H1 (cell line): ENCODE measurements at regions of chr14 and their contacts with region 1.

Region 1: GRCh38 chr14:23068476-23069412 is 11.4 kb upstream of the CDH24 start:
- DNase-seq: peak; percentile 84 to 85
- H3K4me3 ChIP-seq: peak overlapping the region in 1 of 4 experiments; percentile 18; a peak in 1 of 8 replicates
- H3K27ac ChIP-seq: no peak overlapping the region
- H3K4me1 ChIP-seq: peaks cover 5 to 27% (median 15%) of the 10 kb centered on the region in 4 experiments; a peak in 6 of 7 replicates
- H3K27me3 ChIP-seq: no peaks in the 10 kb centered on the region
- CTCF ChIP-seq: peak; percentile 82 to 99 (median 99)
- EP300 ChIP-seq: no peak
- POLR2A ChIP-seq: no peak
- RAD21 ChIP-seq: peak; percentile 59 to 71

Region 2: DNA sequence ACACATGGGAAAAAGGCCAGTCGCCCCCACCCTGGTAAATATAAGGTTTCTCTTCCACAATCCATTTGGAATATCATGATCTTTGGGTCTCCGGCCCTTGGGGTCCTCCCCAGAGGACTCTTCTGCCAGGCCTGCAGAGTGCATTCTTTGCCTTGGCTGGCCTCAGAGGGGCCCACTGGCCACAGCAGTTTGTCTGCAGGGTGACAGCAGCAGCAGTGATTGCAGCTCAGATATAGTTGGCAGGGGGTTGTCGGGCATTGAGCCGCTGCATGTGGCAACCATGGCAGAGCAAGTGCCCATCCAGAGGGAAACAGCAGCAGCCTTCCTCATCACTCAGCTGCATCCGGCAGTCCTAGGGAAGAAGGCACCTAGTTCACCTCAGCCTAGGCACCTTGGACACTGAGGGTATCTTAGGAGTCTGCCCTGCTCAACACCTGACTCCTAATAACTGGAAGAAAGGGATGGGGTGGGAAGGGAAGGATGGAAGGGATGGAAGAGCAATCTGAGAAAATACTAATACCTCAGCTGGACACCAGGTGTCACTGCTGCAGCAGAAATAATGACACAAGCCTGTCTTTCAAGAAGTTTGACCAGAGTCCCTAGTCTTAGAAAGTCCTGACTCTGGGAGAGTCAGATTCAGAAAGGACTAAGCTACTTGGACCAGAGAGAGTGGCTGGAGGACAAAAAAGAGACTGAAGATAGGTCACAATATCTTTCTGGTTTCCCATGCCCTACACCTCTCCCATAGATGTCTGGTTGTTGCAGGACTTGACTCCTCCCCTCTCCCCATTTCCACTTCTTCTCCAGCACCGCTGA is 95.3 kb before region 1 on chr14:
- CTCF ChIA-PET with region 1: interaction called, 9 read pairs
- POLR2A ChIA-PET with region 1: interaction called, 11 read pairs
- DNase-seq: peak in 1 of 2 experiments; percentile 66
- H3K4me3 ChIP-seq: no peak overlapping the region
- H3K27ac ChIP-seq: no peak overlapping the region
- H3K4me1 ChIP-seq: peaks cover 13 to 20% (median 18%) of the 10 kb centered on the region in 4 experiments
- H3K27me3 ChIP-seq: no peaks in the 10 kb centered on the region
- CTCF ChIP-seq: peak in 2 of 3 experiments; percentile 75 to 76; a peak in 3 of 4 replicates
- EP300 ChIP-seq: no peak
- POLR2A ChIP-seq: no peak; a peak in 1 of 3 replicates
- RAD21 ChIP-seq: peak; percentile 84 to 88

Region 3: DNA sequence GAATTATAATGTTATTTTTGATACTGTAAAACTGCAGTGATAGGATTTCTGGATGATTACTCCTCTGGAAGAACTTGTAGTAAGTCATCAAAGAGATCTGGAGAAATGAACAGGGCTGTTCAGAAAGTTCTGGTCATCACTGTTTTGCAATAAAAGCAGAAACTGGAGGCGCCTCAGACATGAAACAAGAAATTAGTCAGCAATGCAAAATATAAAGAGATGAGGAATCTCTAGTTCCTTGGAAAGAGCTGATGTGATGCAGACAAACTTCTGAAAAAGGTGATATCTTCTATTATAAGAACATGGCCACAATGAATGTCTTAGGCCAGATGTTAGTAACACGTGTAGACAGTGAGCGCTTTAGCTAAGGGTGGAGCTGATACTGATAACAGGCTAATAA is 16.7 kb after region 1 on chr14:
- CTCF ChIA-PET with region 1: interaction called, 35 read pairs
- POLR2A ChIA-PET with region 1: interaction called, 17 read pairs
- DNase-seq: no peak
- H3K4me3 ChIP-seq: no peak overlapping the region
- H3K27ac ChIP-seq: no peak overlapping the region
- H3K4me1 ChIP-seq: no peaks in the 10 kb centered on the region
- H3K27me3 ChIP-seq: no peaks in the 10 kb centered on the region
- CTCF ChIP-seq: no peak
- EP300 ChIP-seq: no peak
- POLR2A ChIP-seq: no peak
- RAD21 ChIP-seq: no peak

Region 4: GRCh38 chr14:23095196-23096108 is 26.7 kb after region 1 on chr14 and contains the start of gene C14orf119:
- CTCF ChIA-PET with region 1: interaction called, 23 read pairs
- POLR2A ChIA-PET with region 1: interaction called, 36 read pairs
- DNase-seq: peak in 1 of 2 experiments; percentile 96
- H3K4me3 ChIP-seq: peak within 1 kb of the TSS; percentile 92 to 97 (median 96)
- H3K27ac ChIP-seq: peak within 1 kb of the TSS; percentile 99
- H3K4me1 ChIP-seq: no peaks in the 10 kb centered on the region; a peak in 3 of 7 replicates
- H3K27me3 ChIP-seq: no peaks in the 10 kb centered on the region
- CTCF ChIP-seq: no peak
- EP300 ChIP-seq: no peak
- POLR2A ChIP-seq: no peak; a peak in 1 of 3 replicates
- RAD21 ChIP-seq: no peak
- total RNA-seq, gene C14orf119: 78.1 and 91.2 TPM in 2 replicates

Region 5: GRCh38 chr14:23104591-23105347 is 36.0 kb after region 1 on chr14 and contains the start of gene CIROP:
- CTCF ChIA-PET with region 1: interaction called, 18 read pairs
- POLR2A ChIA-PET with region 1: interaction called, 12 read pairs
- DNase-seq: peak in 1 of 2 experiments; percentile 45
- H3K4me3 ChIP-seq: no peak within 1 kb of the TSS; a peak in 1 of 8 replicates
- H3K27ac ChIP-seq: no peak within 1 kb of the TSS
- H3K4me1 ChIP-seq: peaks cover 6 to 15% (median 9%) of the 10 kb centered on the region in 4 experiments; a peak in 4 of 7 replicates
- H3K27me3 ChIP-seq: no peaks in the 10 kb centered on the region; a peak in 2 of 7 replicates
- CTCF ChIP-seq: peak in 1 of 3 experiments; percentile 2; a peak in 1 of 4 replicates
- EP300 ChIP-seq: no peak
- POLR2A ChIP-seq: no peak
- RAD21 ChIP-seq: no peak
- total RNA-seq, gene CIROP: not detected in 2 replicates

Region 6: DNA sequence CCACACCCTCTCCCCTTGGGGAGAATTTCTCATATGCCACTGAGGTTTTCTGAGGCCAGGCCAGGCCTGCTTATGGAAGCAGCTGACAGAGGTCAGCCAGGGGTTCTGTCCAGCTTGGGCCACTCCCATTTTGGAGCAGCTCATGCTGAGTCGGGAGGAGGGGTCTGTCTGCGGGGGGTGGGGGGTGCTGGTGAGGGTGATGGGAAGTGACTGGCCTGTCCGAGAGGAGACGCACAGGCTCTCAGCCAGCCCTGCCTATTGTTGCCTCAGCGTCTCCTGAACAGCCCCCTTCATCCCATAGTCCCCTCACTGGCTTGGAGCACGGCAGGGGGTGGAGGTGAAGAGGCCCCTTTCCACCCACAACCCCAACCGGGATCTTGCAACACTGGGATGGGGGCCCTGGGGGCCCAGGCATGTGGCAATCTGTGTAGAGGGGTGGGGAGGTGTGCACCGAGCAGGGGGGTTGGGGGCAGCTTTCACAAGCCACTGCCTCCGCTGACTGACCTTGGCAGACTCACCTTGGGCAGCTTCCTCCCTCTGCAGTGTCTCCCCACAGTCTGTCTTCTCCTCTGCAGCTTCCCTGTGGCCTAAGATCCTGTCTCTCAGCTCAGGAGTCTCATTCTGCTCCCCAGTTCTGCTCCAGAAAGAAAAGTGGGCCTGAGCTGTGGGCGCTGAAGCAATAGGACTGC is 44.8 kb after region 1 on chr14:
- CTCF ChIA-PET with region 1: interaction called, 18 read pairs
- POLR2A ChIA-PET with region 1: interaction called, 10 read pairs
- DNase-seq: no peak
- H3K4me3 ChIP-seq: 0 out of 8 replicates have a peak overlapping the region, but pooled peaks of 1 of the 4 experiments have one; percentile 17
- H3K27ac ChIP-seq: no peak overlapping the region
- H3K4me1 ChIP-seq: peaks cover 0 to 14% (median 4%) of the 10 kb centered on the region in 4 experiments; a peak in 6 of 7 replicates
- H3K27me3 ChIP-seq: peaks cover 0 to 3% (median 0%) of the 10 kb centered on the region in 4 experiments; a peak in 2 of 7 replicates
- CTCF ChIP-seq: no peak
- EP300 ChIP-seq: no peak
- POLR2A ChIP-seq: no peak
- RAD21 ChIP-seq: no peak